ENCODE measurements at regions of chr20 and their contacts with region 1.

Region 1: GRCh38 chr20:35447082-35447789 is 8.2 kb upstream of the CEP250 start:
- DNase-seq: peak; percentile 64 to 77 (median 69)
- H3K4me3 ChIP-seq: peak overlapping the region in 2 of 3 experiments; percentile 33 to 69
- H3K4me3 Mint-ChIP-seq: peak overlapping the region; percentile 81 to 90
- H3K27ac ChIP-seq: no peak overlapping the region
- H3K27ac Mint-ChIP-seq: peak overlapping the region in 1 of 7 donors; percentile 58
- H3K4me1 ChIP-seq: peaks cover 0 to 3% of the 10 kb centered on the region in 2 donors
- H3K4me1 Mint-ChIP-seq: peaks cover 3% of the 10 kb centered on the region
- H3K27me3 ChIP-seq: peaks cover 0 to 2% of the 10 kb centered on the region in 2 donors
- H3K27me3 Mint-ChIP-seq: peaks cover 1 to 12% (median 6%) of the 10 kb centered on the region in 3 donors
- CTCF ChIP-seq: peak; percentile 95

Region 2: DNA sequence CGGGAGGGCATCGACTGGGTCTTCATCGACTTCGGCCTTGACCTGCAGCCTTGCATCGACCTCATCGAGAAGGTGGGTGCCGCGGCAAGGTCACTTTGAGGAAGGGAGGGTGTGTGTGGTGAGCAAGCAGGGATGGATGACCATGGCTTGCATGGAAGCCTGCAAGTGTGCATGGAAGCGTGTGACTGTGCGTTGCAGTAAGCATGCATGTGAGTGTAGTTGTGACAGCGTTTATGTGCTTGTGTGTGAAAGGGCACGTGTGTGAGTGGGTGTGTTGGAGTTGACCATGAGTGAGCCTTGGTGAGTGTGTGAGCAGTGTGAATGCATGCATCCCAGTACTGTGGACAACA is 459.1 kb before region 1 on chr20:
- intact Hi-C with region 1: no loop called
- DNase-seq: no peak
- H3K4me3 ChIP-seq: no peak overlapping the region
- H3K4me3 Mint-ChIP-seq: no peak overlapping the region
- H3K27ac ChIP-seq: no peak overlapping the region
- H3K27ac Mint-ChIP-seq: no peak overlapping the region
- H3K4me1 ChIP-seq: no peaks in the 10 kb centered on the region
- H3K4me1 Mint-ChIP-seq: no peaks in the 10 kb centered on the region
- H3K27me3 ChIP-seq: no peaks in the 10 kb centered on the region
- H3K27me3 Mint-ChIP-seq: peaks cover 10 to 27% (median 24%) of the 10 kb centered on the region in 3 donors
- CTCF ChIP-seq: no peak

Region 3: GRCh38 chr20:35303735-35304491 is 143.3 kb before region 1 on chr20:
- intact Hi-C with region 1: loop called (anchors 5 to 10 kb)
- DNase-seq: peak; percentile 66 to 80 (median 73)
- H3K4me3 ChIP-seq: no peak overlapping the region
- H3K4me3 Mint-ChIP-seq: no peak overlapping the region
- H3K27ac ChIP-seq: no peak overlapping the region
- H3K27ac Mint-ChIP-seq: peak overlapping the region in 1 of 7 donors; percentile 14
- H3K4me1 ChIP-seq: no peaks in the 10 kb centered on the region
- H3K4me1 Mint-ChIP-seq: peaks cover 13% of the 10 kb centered on the region
- H3K27me3 ChIP-seq: no peaks in the 10 kb centered on the region
- H3K27me3 Mint-ChIP-seq: peaks cover 0 to 2% (median 2%) of the 10 kb centered on the region in 3 donors
- CTCF ChIP-seq: peak; percentile 92

Region 4: DNA sequence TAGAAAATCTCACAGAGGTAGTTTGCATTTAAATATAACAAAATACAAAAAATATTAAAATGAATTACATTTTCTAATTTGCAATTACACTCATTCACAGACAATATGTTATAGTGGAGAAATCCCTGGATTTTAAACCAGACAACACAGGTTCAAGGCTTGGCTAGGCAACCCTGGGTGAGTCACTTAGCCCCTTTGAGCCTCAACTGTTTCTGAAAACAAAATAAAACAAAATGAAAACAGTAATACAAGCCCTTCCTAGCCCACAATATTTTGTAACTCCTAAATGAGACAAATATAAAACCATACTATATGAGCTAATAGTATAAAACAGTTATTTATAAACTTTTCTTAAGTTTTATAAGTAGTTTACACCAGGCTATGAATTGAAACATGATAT is 76.5 kb before region 1 on chr20:
- intact Hi-C with region 1: no loop called
- DNase-seq: no peak
- H3K4me3 ChIP-seq: no peak overlapping the region
- H3K4me3 Mint-ChIP-seq: no peak overlapping the region
- H3K27ac ChIP-seq: no peak overlapping the region
- H3K27ac Mint-ChIP-seq: peak overlapping the region in 1 of 7 donors; percentile 31
- H3K4me1 ChIP-seq: no peaks in the 10 kb centered on the region
- H3K4me1 Mint-ChIP-seq: no peaks in the 10 kb centered on the region
- H3K27me3 ChIP-seq: no peaks in the 10 kb centered on the region
- H3K27me3 Mint-ChIP-seq: peaks cover 0 to 4% (median 0%) of the 10 kb centered on the region in 3 donors
- CTCF ChIP-seq: no peak

Region 5: GRCh38 chr20:35410613-35411012 is 36.6 kb before region 1 on chr20:
- intact Hi-C with region 1: no loop called
- DNase-seq: no peak
- H3K4me3 ChIP-seq: peak overlapping the region in 1 of 3 experiments; percentile 93
- H3K4me3 Mint-ChIP-seq: no peak overlapping the region
- H3K27ac ChIP-seq: no peak overlapping the region
- H3K27ac Mint-ChIP-seq: no peak overlapping the region
- H3K4me1 ChIP-seq: peaks cover 11 to 19% of the 10 kb centered on the region in 2 donors
- H3K4me1 Mint-ChIP-seq: peaks cover 15% of the 10 kb centered on the region
- H3K27me3 ChIP-seq: no peaks in the 10 kb centered on the region
- H3K27me3 Mint-ChIP-seq: peaks cover 3% of the 10 kb centered on the region in 3 donors
- CTCF ChIP-seq: no peak

Measured in CD14-positive monocyte (primary cell).